ENCODE measurements at regions of chr3 and their contacts with region 1.

Region 1: DNA sequence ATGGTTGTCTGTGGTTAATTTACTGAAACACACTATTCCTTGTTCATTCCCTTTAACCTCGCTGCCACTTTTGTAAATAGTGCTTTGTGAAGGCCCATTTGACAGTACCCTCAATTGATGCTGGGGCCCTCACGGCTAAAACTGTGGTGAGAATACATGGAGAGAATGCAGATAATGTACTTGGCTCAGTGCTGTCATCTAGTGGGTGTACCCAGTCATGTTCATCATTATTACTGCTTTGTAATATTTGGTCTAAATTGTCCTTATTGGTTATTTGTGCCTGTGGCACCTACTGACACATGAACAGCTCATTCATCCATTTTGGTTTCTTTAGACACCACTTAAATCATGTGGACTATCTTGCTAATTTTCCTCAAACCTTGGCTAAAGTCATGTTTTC is 543.6 kb downstream of the EDEM1 start:
- DNase-seq: no peak
- H3K4me3 ChIP-seq: no peak overlapping the region
- H3K27ac ChIP-seq: no peak overlapping the region
- H3K4me1 ChIP-seq: no peaks in the 10 kb centered on the region
- H3K27me3 ChIP-seq: no peaks in the 10 kb centered on the region
- CTCF ChIP-seq: peak; percentile 45

Region 2: GRCh38 chr3:5426094-5426883 is 304.8 kb before region 1 on chr3:
- intact Hi-C with region 1: loop called (anchors 10 kb)
- DNase-seq: peak; percentile 86
- H3K4me3 ChIP-seq: no peak overlapping the region
- H3K27ac ChIP-seq: no peak overlapping the region
- H3K4me1 ChIP-seq: no peaks in the 10 kb centered on the region
- H3K27me3 ChIP-seq: no peaks in the 10 kb centered on the region
- CTCF ChIP-seq: peak; percentile 79

Region 3: GRCh38 chr3:5568458-5568857 is 162.6 kb before region 1 on chr3:
- intact Hi-C with region 1: loop called (anchors 5 kb)
- DNase-seq: peak; percentile 52
- H3K4me3 ChIP-seq: no peak overlapping the region
- H3K27ac ChIP-seq: no peak overlapping the region
- H3K4me1 ChIP-seq: no peaks in the 10 kb centered on the region
- H3K27me3 ChIP-seq: no peaks in the 10 kb centered on the region
- CTCF ChIP-seq: peak; percentile 36